ENCODE measurements at regions of chr17 and their contacts with region 1.

Region 1: DNA sequence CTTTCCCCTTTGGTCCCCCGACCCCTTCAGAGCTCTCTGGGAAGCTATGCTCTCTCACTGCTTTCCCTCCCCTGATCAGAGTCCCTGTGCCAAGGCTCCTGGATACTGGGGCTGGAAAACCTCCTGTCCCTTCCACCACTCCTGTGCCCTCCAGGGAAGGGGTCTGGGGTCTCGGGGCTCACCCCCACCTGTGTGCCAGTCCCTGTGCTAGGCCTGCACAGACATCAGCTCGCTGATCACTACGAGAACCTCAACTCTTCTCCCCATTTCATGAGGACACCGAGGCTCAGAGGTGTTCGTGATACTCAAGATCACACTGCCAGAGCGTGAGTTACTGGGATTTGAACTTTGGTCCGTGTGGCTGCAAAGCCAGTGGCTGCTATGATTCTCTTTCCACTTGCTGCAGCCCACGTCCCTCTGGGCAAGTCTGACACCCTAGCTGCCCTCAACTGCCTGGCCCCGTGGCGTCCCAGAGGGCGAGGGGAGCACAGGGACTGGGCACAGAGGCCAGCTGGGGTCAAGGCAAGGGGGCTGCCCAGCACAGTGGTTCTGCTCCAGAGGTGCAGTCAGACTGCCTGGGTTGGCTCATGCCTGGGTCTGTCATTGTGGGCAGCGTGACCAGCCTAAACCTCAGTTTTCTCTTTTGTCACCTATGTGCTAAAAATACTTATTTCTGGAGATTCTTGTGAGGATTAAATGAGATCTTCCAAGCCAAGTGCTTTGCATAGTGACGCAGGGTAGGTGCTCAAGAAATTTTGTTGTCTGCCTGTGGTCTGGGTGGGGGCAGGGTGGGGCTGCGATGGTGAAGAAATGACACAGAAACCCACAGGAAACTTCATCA is 43.8 kb upstream of the TOB1 start:
- DNase-seq: peak; percentile 93
- H3K4me3 Mint-ChIP-seq: no peak overlapping the region
- H3K27ac Mint-ChIP-seq: peak overlapping the region; percentile 74
- H3K4me1 Mint-ChIP-seq: peaks cover 55% of the 10 kb centered on the region
- H3K27me3 Mint-ChIP-seq: no peaks in the 10 kb centered on the region

Region 2: GRCh38 chr17:50834429-50835300 is 75.3 kb before region 1 on chr17:
- CTCF ChIA-PET with region 1: no interaction called
- POLR2A ChIA-PET with region 1: no interaction called
- intact Hi-C with region 1: no loop called
- DNase-seq: no peak
- H3K4me3 Mint-ChIP-seq: no peak overlapping the region
- H3K27ac Mint-ChIP-seq: no peak overlapping the region
- H3K4me1 Mint-ChIP-seq: no peaks in the 10 kb centered on the region
- H3K27me3 Mint-ChIP-seq: peaks cover 17% of the 10 kb centered on the region

Region 3: DNA sequence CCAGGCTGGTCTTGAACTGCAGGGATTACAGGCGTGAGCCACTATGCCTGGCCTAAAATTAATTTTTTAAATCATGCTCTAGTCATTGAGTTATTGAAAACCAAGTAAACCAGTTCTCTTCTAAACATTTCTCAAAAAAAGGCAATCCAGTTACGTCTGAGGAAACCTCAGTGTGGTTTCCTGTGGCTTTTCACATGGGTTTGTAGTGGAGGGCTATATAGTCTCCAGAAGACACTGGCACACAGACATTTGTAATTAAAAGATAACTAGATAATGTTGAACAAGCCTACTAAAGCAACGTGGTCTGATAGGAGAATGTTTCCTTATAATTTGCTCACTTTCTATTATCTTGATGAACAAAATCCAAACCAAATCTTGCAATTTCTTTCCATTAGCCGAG is 38.6 kb before region 1 on chr17:
- CTCF ChIA-PET with region 1: interaction called, 3 read pairs
- POLR2A ChIA-PET with region 1: interaction called, 44 read pairs
- intact Hi-C with region 1: loop called (anchors 1 kb)
- DNase-seq: peak; percentile 50
- H3K4me3 Mint-ChIP-seq: no peak overlapping the region
- H3K27ac Mint-ChIP-seq: peak overlapping the region; percentile 3
- H3K4me1 Mint-ChIP-seq: peaks cover 39% of the 10 kb centered on the region
- H3K27me3 Mint-ChIP-seq: no peaks in the 10 kb centered on the region

Region 4: DNA sequence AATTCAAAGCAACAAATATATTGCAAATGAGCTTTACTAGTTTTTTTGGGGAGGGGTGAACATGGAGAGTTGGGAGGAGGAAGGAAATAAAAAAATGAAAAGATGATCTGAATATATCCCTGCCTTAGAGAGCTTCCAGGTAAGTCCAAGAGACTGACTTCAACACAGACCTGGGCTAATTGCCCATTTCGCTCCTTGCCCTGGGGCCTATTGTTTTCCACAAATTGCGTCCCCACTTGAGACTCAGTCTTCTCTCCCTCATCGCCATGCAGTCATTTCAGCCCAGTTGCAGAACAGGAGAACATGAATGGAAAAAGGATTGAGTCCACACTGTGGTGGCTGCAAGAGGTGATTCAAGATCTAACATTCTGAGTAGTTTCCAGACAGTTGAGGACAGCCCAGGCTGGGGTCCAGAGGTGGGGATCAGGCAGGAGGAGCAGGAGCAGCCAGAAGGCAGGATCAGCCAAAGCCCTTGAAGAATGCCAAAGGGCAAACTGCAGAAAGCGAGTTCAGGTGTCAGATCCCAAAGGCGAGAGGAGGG is 22.2 kb before region 1 on chr17:
- CTCF ChIA-PET with region 1: interaction called, 3 read pairs
- POLR2A ChIA-PET with region 1: interaction called, 4 read pairs
- intact Hi-C with region 1: loop called (anchors 2 kb)
- DNase-seq: no peak
- H3K4me3 Mint-ChIP-seq: no peak overlapping the region
- H3K27ac Mint-ChIP-seq: peak overlapping the region; percentile 30
- H3K4me1 Mint-ChIP-seq: peaks cover 23% of the 10 kb centered on the region
- H3K27me3 Mint-ChIP-seq: no peaks in the 10 kb centered on the region

Region 5: GRCh38 chr17:50944054-50944901 is 34.3 kb after region 1 on chr17:
- CTCF ChIA-PET with region 1: no interaction called
- POLR2A ChIA-PET with region 1: interaction called, 8 read pairs
- intact Hi-C with region 1: loop called (anchors 2 kb)
- DNase-seq: peak; percentile 88
- H3K4me3 Mint-ChIP-seq: peak overlapping the region; percentile 76
- H3K27ac Mint-ChIP-seq: peak overlapping the region; percentile 86
- H3K4me1 Mint-ChIP-seq: peaks cover 23% of the 10 kb centered on the region
- H3K27me3 Mint-ChIP-seq: no peaks in the 10 kb centered on the region